ENCODE measurements at regions of chr9 and their contacts with region 1.

Region 1: DNA sequence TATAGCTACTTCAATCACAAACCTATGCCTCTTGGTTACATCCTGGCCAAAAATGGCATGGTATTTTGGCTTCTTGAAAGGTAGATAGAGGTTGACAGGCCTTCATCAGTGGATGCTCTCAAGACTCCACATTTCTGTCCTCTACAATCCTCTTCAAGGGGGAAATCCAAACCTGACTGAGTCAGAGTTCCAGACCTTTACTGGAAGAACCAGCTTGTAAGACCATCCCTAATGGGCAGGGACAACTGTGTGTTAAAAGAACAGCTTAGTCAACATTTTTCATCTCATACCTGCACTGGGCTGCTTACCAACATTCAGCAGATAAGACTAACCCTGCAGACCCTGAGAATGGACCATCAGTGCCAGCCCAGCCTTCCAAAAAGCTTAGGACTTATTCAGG is 155.7 kb downstream of the CDK5RAP2 start:
- DNase-seq: no peak
- ATAC-seq: no peak
- H3K4me3 Mint-ChIP-seq: no peak overlapping the region
- H3K27ac Mint-ChIP-seq: no peak overlapping the region
- H3K4me1 Mint-ChIP-seq: no peaks in the 10 kb centered on the region
- H3K27me3 Mint-ChIP-seq: no peaks in the 10 kb centered on the region

Region 2: DNA sequence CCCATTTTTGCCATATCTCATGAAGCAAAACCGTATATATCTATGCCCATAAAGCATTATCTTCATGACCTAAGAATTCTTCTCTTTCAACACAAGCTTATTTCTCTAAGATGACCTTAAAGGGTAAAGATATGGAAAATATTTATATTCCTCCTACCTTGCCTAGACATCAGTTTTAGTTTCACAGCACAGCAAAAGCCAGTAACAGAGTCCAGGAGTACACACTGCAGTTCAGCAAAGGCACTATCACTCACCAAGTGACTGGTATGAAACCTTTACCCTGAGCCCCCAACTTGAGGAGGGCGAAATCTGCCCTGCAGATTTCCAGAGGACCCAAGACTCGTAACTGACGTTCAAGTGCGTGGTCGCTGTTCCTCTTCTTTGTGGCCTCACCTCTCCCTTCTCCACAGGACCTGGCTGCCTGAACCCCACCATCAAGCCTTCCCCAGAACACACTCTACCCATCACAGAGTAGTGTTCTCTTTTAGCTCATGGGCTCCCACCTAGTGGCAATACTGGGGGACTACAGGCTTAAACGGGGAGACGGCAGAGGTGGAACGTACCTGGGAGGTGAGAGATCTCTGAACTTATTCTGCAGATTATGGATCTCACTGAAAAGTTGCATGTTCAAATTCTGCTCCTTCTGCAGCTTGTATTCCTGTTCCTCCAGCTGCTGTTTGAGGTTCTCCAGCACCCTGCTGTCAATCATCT is 14.7 kb after region 1 on chr9:
- CTCF ChIA-PET with region 1: interaction called, 19 read pairs
- POLR2A ChIA-PET with region 1: no interaction called
- DNase-seq: peak; percentile 36
- ATAC-seq: peak; percentile 64
- H3K4me3 Mint-ChIP-seq: no peak overlapping the region
- H3K27ac Mint-ChIP-seq: no peak overlapping the region
- H3K4me1 Mint-ChIP-seq: peaks cover 24% of the 10 kb centered on the region
- H3K27me3 Mint-ChIP-seq: no peaks in the 10 kb centered on the region

Region 3: DNA sequence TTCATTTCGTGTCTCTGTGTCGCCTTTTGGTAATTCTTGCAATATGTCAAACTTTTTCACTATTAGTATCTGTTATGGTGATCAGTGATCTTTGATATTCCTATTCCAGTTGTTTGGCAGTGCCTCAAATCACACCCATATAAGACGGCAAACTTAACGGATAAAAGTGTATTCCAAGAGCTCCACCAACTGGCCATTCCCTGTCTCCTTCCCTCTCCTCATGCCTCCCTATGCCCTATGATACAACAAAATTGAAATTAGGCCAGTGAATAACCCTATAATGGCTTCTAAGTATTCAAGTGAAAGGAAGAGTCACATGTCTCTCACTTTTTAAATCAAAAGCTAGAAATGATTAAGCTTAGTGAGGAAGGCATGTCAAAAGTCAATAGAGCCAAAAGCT is 80.9 kb after region 1 on chr9:
- CTCF ChIA-PET with region 1: no interaction called
- POLR2A ChIA-PET with region 1: no interaction called
- DNase-seq: no peak
- ATAC-seq: no peak
- H3K4me3 Mint-ChIP-seq: no peak overlapping the region
- H3K27ac Mint-ChIP-seq: no peak overlapping the region
- H3K4me1 Mint-ChIP-seq: peaks cover 3% of the 10 kb centered on the region
- H3K27me3 Mint-ChIP-seq: no peaks in the 10 kb centered on the region